HCT116 (cell line): ENCODE measurements at regions of chr2 and their contacts with region 1.

Region 1: DNA sequence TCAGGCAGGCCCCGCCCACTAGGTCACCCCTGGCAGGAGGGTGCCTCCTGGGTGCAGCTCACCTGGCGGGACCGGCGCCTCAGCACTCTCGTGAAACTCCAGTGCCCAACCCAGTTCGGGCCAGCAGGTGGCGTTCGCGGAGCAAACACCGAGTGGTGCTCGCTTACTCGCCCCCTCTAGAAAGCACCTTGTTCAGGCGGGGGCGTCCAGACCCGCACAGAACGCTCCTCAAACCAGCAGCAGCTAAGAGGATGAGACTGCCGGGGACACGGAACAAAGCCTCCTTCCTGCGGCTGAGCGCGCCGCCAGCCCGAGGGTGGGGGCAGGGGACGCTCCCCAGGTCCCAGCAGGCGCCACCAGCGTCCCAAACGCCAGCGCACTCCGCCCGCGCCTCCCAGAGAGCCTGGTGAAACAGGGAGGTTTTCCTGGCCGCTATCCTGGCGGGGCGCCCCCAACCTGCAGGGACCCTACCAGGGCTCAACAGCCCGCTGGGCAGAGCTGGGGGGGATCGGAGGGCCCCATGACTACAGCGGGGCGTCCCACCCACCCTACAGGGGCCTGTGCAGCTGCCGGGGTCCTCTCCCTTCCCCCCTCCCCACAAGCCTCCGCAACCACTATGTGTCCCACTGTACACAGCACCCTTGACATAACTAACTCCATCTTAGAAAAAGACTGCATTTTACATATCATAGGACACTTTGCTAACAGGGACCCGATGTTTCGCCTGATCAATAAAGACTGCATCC is 44.7 kb downstream of the MRPS5 start:
- DNase-seq: peak; percentile 63
- ATAC-seq: peak; percentile 95
- H3K4me3 ChIP-seq: peak overlapping the region; percentile 50 to 63
- H3K27ac ChIP-seq: peak overlapping the region; percentile 25; the same call in 1 of the 2 replicates
- H3K4me1 ChIP-seq: peaks cover 8 to 19% of the 10 kb centered on the region in 2 experiments; a peak in 3 of 4 replicates
- H3K27me3 ChIP-seq: 0 out of 2 replicates have a peak, but pooled peaks cover 6% of the 10 kb centered on the region
- CTCF ChIP-seq: peak; percentile 82 to 85 (median 84)
- POLR2A ChIP-seq: no peak
- RAD21 ChIP-seq: peak; percentile 72

Region 2: DNA sequence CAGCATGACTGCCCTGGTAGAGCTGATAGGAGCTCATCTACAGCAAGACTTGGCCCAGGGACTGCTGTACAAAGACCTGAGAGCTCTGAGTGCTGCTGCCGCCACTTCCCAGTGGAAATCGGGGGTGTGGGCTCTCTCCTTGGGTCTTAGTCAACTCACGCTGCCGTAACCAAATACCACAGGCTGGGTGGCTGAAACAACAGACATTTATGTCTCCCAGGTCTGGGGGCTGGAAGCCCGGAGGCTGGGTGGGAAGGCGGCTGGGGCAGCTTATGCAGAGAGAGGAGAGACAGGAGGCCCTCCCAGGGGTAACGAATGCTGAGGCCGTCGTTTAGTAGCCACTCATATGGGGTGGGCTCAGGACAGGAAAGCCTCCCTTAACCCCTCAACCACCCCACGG is 66.8 kb before region 1 on chr2:
- CTCF ChIA-PET with region 1: no interaction called
- POLR2A ChIA-PET with region 1: no interaction called
- RAD21 ChIA-PET with region 1: no interaction called
- intact Hi-C with region 1: no loop called
- DNase-seq: no peak
- ATAC-seq: no peak
- H3K4me3 ChIP-seq: no peak overlapping the region
- H3K27ac ChIP-seq: no peak overlapping the region
- H3K4me1 ChIP-seq: no peaks in the 10 kb centered on the region
- H3K27me3 ChIP-seq: no peaks in the 10 kb centered on the region
- CTCF ChIP-seq: no peak
- POLR2A ChIP-seq: no peak
- RAD21 ChIP-seq: no peak

Region 3: DNA sequence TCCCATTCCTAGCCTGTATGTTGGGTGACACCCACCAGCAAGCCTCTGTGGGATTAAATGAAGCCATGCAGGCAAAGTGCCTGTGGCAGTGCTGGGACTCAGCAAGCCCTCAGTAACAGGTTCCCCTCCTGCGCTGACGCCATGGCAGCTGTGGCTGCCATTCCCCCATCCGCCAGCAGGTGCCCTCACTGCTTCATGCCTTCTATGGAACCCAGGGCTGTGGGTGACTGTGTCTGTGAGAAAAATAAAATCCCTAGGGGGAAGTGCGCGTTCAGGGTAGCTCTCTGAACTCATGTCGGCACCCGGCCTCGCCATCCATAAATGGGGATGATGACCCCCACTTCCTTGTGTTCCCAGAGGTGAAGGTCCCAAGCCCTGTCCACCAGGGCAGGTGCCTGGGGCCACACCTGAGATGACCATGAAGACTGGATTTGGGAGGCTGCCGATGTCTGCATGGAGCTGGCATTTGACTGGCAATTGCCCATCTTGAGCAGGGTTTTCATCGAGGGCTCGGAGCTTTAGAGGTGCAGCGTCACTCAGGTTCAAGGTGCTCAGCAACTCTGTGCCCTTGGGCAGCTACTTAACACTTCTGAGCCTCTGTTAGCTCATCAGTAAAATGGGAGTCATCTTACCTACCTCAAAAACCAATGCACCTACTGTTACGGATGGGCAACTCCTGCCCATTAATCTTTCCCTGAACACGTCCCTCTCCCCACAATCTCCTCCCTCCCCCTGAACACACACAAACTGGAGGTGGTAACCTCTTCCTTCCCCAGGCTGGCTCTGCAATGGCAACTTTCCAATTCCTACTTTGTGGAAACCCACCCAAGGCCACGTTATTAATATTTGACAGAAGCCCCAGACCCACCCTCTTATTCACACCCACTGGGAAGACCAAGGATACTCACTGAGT is 54.4 kb before region 1 on chr2:
- CTCF ChIA-PET with region 1: interaction called, 27 read pairs
- POLR2A ChIA-PET with region 1: interaction called, 4 read pairs
- RAD21 ChIA-PET with region 1: interaction called, 3 read pairs
- intact Hi-C with region 1: loop called (anchors 1 kb)
- DNase-seq: peak; percentile 34
- ATAC-seq: peak; percentile 91
- H3K4me3 ChIP-seq: no peak overlapping the region
- H3K27ac ChIP-seq: no peak overlapping the region
- H3K4me1 ChIP-seq: peaks cover 0 to 8% of the 10 kb centered on the region in 2 experiments; a peak in 1 of 4 replicates
- H3K27me3 ChIP-seq: no peaks in the 10 kb centered on the region
- CTCF ChIP-seq: peak; percentile 83 to 95 (median 94); a peak in 5 of 6 replicates
- POLR2A ChIP-seq: no peak
- RAD21 ChIP-seq: peak; percentile 84

Region 4: DNA sequence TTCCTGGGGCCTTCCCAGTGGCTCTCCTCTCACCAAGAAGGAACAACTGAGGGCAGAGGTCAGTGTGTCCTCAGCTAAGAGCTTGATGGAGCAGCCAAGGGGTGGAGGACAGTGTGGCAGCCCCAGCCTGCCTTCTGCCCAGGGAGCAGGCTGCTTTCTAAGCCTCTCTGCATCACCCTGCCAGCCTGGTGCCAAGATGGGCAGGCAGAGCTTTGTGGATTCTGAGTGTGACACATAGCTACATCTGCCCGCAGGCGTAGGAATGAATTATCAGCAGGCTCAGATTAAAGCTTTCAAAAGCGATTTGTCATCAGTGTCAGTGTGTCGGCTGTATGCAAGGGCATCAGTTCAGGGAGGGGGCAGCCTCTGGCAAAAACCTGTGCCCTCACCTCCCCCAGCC is 42.7 kb before region 1 on chr2:
- CTCF ChIA-PET with region 1: no interaction called
- POLR2A ChIA-PET with region 1: no interaction called
- RAD21 ChIA-PET with region 1: no interaction called
- intact Hi-C with region 1: no loop called
- DNase-seq: no peak
- ATAC-seq: no peak
- H3K4me3 ChIP-seq: no peak overlapping the region
- H3K27ac ChIP-seq: no peak overlapping the region
- H3K4me1 ChIP-seq: peaks cover 7 to 27% of the 10 kb centered on the region in 2 experiments
- H3K27me3 ChIP-seq: no peaks in the 10 kb centered on the region
- CTCF ChIP-seq: no peak
- POLR2A ChIP-seq: no peak
- RAD21 ChIP-seq: no peak

Region 5: GRCh38 chr2:95062242-95063085 is 14.5 kb before region 1 on chr2:
- CTCF ChIA-PET with region 1: interaction called, 10 read pairs
- POLR2A ChIA-PET with region 1: interaction called, 3 read pairs
- RAD21 ChIA-PET with region 1: no interaction called
- intact Hi-C with region 1: no loop called
- DNase-seq: no peak
- ATAC-seq: peak; percentile 47; the same call in 1 of the 2 replicates
- H3K4me3 ChIP-seq: no peak overlapping the region
- H3K27ac ChIP-seq: no peak overlapping the region
- H3K4me1 ChIP-seq: no peaks in the 10 kb centered on the region
- H3K27me3 ChIP-seq: no peaks in the 10 kb centered on the region
- CTCF ChIP-seq: no peak
- POLR2A ChIP-seq: no peak
- RAD21 ChIP-seq: no peak